GM12878 (cell line): ENCODE measurements at regions of chrX and their contacts with region 1.

Region 1: DNA sequence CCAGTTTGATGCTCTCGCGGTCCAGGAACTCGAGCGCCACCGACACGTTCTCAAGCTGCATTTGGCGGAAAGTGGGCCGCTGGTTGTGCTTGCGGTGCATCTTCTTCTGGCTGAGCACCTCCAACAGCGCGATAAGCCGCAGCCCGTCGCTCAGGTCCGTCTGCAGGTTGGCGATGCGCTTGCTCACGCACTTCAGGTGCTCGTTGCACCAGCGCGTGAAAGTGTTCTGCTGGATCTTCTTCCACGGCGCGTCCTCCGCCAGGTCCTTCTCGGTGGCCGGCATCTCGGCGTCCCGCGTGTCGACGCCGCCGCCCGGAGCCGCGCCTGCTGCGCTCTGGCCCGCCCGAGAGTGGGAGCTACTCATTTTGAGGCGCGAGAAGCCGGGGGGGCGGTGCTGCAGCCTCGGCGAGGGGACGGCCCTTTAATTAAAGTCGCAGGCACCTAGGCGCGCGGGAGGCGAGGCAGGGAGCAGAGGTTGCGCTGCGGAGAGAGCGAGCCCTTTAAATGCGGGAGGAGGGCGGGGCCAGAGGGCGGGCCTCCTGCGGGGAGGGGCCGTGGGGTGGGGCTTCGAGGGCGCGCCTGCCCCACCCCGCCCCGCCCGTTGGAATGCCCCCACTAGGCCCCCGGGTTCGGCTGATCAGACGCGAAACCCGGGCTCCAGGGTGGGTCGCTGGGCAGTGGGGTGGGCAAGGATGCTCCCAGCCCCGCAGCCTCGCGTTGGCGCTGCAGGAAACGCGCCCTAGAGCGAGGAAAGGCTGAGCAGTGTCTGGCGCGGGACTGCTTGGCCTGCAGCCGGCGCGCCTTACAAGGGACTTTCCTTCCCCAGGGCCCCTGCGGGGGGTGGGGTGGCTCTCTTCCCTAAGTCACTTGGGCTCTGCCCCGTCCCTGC is 3.3 kb downstream of the FLNA start:
- DNase-seq: peak; percentile 53
- ATAC-seq: peak; percentile 66
- H3K4me3 ChIP-seq: peak overlapping the region; percentile 88
- H3K27ac ChIP-seq: peak overlapping the region; percentile 58
- H3K4me1 ChIP-seq: peaks cover 11% of the 10 kb centered on the region
- H3K27me3 ChIP-seq: no peaks in the 10 kb centered on the region
- CTCF ChIP-seq: peak in 1 of 3 experiments; percentile 19; a peak in 1 of 6 replicates
- EP300 ChIP-seq: no peak
- POLR2A ChIP-seq: peak; percentile 99
- RAD21 ChIP-seq: no peak

Region 2: GRCh38 chrX:153909024-153909970 is 461.8 kb before region 1 on chrX:
- CTCF ChIA-PET with region 1: no interaction called
- POLR2A ChIA-PET with region 1: no interaction called
- RAD21 ChIA-PET with region 1: no interaction called
- SMC1A ChIA-PET with region 1: no interaction called
- in situ Hi-C with region 1: no loop called
- intact Hi-C with region 1: no loop called
- DNase-seq: no peak
- ATAC-seq: peak; percentile 87
- H3K4me3 ChIP-seq: no peak overlapping the region
- H3K27ac ChIP-seq: no peak overlapping the region
- H3K4me1 ChIP-seq: no peaks in the 10 kb centered on the region
- H3K27me3 ChIP-seq: no peaks in the 10 kb centered on the region
- CTCF ChIP-seq: no peak
- EP300 ChIP-seq: no peak
- POLR2A ChIP-seq: no peak; the same call in 1 of the 2 replicates
- RAD21 ChIP-seq: no peak

Region 3: GRCh38 chrX:153934473-153935325 is 436.4 kb before region 1 on chrX and contains the start of gene NAA10:
- CTCF ChIA-PET with region 1: no interaction called
- POLR2A ChIA-PET with region 1: no interaction called
- RAD21 ChIA-PET with region 1: no interaction called
- SMC1A ChIA-PET with region 1: no interaction called
- in situ Hi-C with region 1: loop called (anchors 5 kb)
- intact Hi-C with region 1: loop called (anchors 5 kb)
- DNase-seq: no peak
- ATAC-seq: peak; percentile 97
- H3K4me3 ChIP-seq: peak within 1 kb of the TSS; percentile 90
- H3K27ac ChIP-seq: 0 out of 2 replicates have a peak within 1 kb of the TSS, but pooled peaks have one; percentile 48
- H3K4me1 ChIP-seq: no peaks in the 10 kb centered on the region
- H3K27me3 ChIP-seq: no peaks in the 10 kb centered on the region
- CTCF ChIP-seq: no peak
- EP300 ChIP-seq: no peak
- POLR2A ChIP-seq: peak; percentile 60; the same call in 1 of the 2 replicates
- RAD21 ChIP-seq: no peak
- polyA plus RNA-seq, gene NAA10: 7.9 to 26.6 TPM

Region 4: GRCh38 chrX:154355776-154356140 is 15.4 kb before region 1 on chrX:
- CTCF ChIA-PET with region 1: no interaction called
- POLR2A ChIA-PET with region 1: no interaction called
- RAD21 ChIA-PET with region 1: no interaction called
- SMC1A ChIA-PET with region 1: no interaction called
- in situ Hi-C with region 1: no loop called
- intact Hi-C with region 1: no loop called
- DNase-seq: no peak
- ATAC-seq: no peak
- H3K4me3 ChIP-seq: no peak overlapping the region
- H3K27ac ChIP-seq: no peak overlapping the region
- H3K4me1 ChIP-seq: no peaks in the 10 kb centered on the region
- H3K27me3 ChIP-seq: no peaks in the 10 kb centered on the region
- CTCF ChIP-seq: no peak
- EP300 ChIP-seq: no peak
- POLR2A ChIP-seq: no peak
- RAD21 ChIP-seq: no peak

Region 5: DNA sequence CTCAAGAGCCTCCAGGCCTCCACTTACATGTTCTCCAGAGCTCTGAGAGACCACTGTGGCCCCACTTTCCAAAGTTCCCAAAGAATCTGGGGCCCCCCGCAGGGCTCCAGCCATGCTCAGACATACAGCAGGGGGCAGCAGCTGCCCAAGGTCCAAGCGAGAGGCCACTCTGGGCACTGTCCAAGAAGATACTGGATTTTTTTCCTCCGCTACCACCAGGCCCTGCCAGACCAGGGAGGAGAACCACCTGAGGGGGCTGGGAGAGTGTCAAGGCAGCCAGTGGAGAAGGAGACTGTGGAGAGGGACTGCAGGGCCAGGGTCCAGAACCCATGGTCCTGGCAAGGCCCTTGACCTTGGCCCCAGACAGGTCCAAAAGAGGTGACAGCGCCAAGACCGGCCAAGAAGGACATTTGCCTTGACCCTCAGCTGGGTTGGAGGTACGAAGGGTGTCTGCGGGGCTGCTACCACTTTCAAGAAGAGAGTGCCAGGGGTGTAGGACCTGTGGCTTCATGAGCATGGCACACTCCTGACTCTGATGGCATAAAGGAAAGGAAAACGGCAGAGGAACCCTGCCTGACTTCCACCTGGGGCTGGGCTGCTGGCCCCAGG is 13.3 kb after region 1 on chrX:
- CTCF ChIA-PET with region 1: interaction called, 17 read pairs
- POLR2A ChIA-PET with region 1: interaction called, 6 read pairs
- RAD21 ChIA-PET with region 1: interaction called, 10 read pairs
- SMC1A ChIA-PET with region 1: interaction called, 10 read pairs
- in situ Hi-C with region 1: no loop called
- intact Hi-C with region 1: loop called (anchors 1 kb)
- DNase-seq: no peak
- ATAC-seq: no peak
- H3K4me3 ChIP-seq: no peak overlapping the region
- H3K27ac ChIP-seq: no peak overlapping the region
- H3K4me1 ChIP-seq: no peaks in the 10 kb centered on the region; the same call in 1 of the 2 replicates
- H3K27me3 ChIP-seq: no peaks in the 10 kb centered on the region
- CTCF ChIP-seq: peak in 1 of 3 experiments; percentile 14; a peak in 1 of 6 replicates
- EP300 ChIP-seq: no peak
- POLR2A ChIP-seq: no peak
- RAD21 ChIP-seq: no peak

Region 6: DNA sequence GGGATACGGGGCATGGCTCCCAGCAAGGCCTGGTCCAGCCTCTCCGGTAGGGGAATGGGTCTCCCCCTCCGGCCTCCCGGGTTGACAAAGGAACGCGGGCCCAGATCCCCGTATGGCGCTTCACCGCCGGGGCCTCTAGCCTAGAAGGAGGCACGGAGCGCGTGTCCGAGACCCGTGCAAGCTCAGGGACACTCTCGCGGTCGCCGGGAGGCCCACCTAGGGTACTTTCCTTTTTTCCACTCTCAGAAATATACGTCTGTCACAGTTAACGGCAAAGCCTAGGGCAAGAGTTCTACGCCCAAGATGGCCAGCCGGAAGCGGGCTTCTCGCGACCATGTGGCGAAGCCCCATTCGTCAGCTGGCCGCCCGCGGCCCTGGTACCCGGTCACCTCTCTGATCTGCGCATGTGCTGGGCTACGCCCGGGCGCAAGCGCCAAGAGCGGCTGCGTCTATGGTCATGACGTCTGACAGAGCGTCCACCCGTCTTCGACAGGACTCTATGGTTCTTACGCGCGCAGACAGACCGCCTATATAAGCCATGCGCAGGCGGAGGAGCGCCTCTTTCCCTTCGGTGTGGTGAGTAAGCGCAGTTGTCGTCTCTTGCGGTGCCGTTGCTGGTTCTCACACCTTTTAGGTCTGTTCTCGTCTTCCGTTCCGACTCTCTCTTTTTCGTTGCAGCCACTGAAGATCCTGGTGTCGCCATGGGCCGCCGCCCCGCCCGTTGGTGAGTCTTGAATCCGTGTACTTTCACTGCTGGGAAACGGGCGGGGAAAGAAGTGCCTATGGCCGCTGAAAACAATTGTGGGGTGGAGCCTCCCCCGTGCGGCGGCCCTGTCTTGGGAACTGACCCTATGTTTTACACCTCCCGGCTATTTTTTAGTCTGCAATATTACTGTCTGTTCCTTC is 26.9 kb after region 1 on chrX and contains the start of gene RPL10:
- CTCF ChIA-PET with region 1: interaction called, 11 read pairs
- POLR2A ChIA-PET with region 1: interaction called, 5 read pairs
- RAD21 ChIA-PET with region 1: interaction called, 4 read pairs
- SMC1A ChIA-PET with region 1: interaction called, 7 read pairs
- in situ Hi-C with region 1: no loop called
- intact Hi-C with region 1: no loop called
- DNase-seq: peak; percentile 90
- ATAC-seq: peak; percentile 78
- H3K4me3 ChIP-seq: peak within 1 kb of the TSS; percentile 73
- H3K27ac ChIP-seq: peak within 1 kb of the TSS; percentile 97
- H3K4me1 ChIP-seq: peaks cover 3% of the 10 kb centered on the region; the same call in 1 of the 2 replicates
- H3K27me3 ChIP-seq: no peaks in the 10 kb centered on the region
- CTCF ChIP-seq: no peak
- EP300 ChIP-seq: no peak
- POLR2A ChIP-seq: peak; percentile 99
- RAD21 ChIP-seq: no peak
- polyA plus RNA-seq, gene RPL10: 5,383 to 7,222 TPM

Region 7: GRCh38 chrX:154428176-154429010 is 57.3 kb after region 1 on chrX and contains the start of gene ATP6AP1:
- CTCF ChIA-PET with region 1: interaction called, 12 read pairs
- POLR2A ChIA-PET with region 1: interaction called, 7 read pairs
- RAD21 ChIA-PET with region 1: interaction called, 3 read pairs
- SMC1A ChIA-PET with region 1: no interaction called
- in situ Hi-C with region 1: no loop called
- intact Hi-C with region 1: loop called (anchors 10 kb)
- DNase-seq: peak; percentile 73
- ATAC-seq: peak; percentile 99
- H3K4me3 ChIP-seq: peak within 1 kb of the TSS; percentile 73
- H3K27ac ChIP-seq: 0 out of 2 replicates have a peak within 1 kb of the TSS, but pooled peaks have one; percentile 4
- H3K4me1 ChIP-seq: no peaks in the 10 kb centered on the region
- H3K27me3 ChIP-seq: no peaks in the 10 kb centered on the region
- CTCF ChIP-seq: no peak
- EP300 ChIP-seq: no peak
- POLR2A ChIP-seq: peak; percentile 87
- RAD21 ChIP-seq: no peak
- polyA plus RNA-seq, gene ATP6AP1: 4.5 to 7.8 TPM

Region 8: DNA sequence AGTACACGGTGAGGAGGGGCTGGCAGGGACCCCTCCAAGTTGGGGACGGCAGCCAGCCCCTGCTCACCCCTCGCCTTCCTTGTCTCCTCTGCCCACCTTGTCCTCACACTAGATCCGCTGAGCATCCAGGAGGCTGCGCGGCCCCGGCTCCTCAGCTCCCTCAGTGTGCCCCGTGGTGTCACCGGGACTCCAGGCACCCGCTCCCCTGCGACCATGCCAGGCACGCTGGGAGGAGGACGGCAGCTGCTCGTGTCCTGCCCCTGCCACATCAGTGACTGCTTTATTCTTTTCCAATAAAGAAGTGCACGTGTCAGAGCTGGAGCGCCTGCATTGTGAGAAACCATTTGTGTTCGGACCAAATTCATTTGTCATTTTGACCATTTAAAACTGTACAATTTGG is 79.2 kb after region 1 on chrX:
- CTCF ChIA-PET with region 1: no interaction called
- POLR2A ChIA-PET with region 1: no interaction called
- RAD21 ChIA-PET with region 1: no interaction called
- SMC1A ChIA-PET with region 1: no interaction called
- in situ Hi-C with region 1: no loop called
- intact Hi-C with region 1: no loop called
- DNase-seq: no peak
- ATAC-seq: no peak
- H3K4me3 ChIP-seq: no peak overlapping the region
- H3K27ac ChIP-seq: no peak overlapping the region
- H3K4me1 ChIP-seq: no peaks in the 10 kb centered on the region
- H3K27me3 ChIP-seq: no peaks in the 10 kb centered on the region
- CTCF ChIP-seq: no peak
- EP300 ChIP-seq: no peak
- POLR2A ChIP-seq: no peak
- RAD21 ChIP-seq: no peak

Region 9: GRCh38 chrX:154526901-154527675 is 156.0 kb after region 1 on chrX:
- CTCF ChIA-PET with region 1: interaction called, 21 read pairs
- POLR2A ChIA-PET with region 1: interaction called, 6 read pairs
- RAD21 ChIA-PET with region 1: interaction called, 12 read pairs
- SMC1A ChIA-PET with region 1: interaction called, 10 read pairs
- in situ Hi-C with region 1: no loop called
- intact Hi-C with region 1: no loop called
- DNase-seq: peak; percentile 36
- ATAC-seq: peak; percentile 95
- H3K4me3 ChIP-seq: no peak overlapping the region
- H3K27ac ChIP-seq: peak overlapping the region; percentile 83
- H3K4me1 ChIP-seq: peaks cover 10% of the 10 kb centered on the region
- H3K27me3 ChIP-seq: no peaks in the 10 kb centered on the region
- CTCF ChIP-seq: peak; percentile 52 to 57 (median 55)
- EP300 ChIP-seq: no peak
- POLR2A ChIP-seq: peak; percentile 68
- RAD21 ChIP-seq: peak; percentile 27; the same call in 1 of the 2 replicates

Region 10: DNA sequence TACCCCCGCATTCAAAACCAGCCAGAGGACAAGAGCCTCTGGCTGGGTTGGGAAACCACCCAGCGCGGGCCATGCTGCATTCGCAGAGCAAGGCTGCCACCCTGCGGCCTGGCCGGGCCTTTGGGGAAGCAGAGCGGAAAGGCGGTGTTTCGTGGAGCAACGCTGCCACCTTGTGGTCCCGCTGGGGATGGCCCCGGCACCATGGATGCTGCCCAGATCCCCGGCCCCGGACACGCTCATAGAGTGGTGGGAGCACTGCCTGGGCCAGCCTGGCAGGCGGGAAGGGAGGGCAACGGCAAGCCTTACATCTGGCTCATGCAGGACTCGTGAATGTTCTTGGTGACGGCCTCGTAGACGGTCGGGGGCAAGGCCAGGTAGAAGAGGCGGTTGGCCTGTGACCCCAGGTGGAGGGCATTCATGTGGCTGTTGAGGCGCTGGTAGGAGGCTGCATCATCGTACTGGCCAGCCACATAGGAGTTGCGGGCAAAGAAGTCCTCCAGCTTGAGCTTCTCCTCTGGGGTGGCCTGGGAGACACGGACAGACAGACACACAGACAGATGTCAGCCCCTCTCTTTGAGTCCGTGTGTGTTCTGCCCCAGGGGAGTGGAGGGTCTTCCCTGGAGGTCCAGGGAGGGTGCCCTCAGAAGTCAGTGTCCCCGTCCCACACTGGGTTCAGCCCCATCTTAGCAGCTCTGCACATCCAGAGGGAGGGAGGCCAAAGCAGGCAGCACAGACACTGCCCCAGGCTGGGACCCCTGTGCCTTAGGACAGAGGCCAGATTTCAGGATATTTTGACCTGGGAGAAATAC is 163.9 kb after region 1 on chrX:
- CTCF ChIA-PET with region 1: interaction called, 18 read pairs
- POLR2A ChIA-PET with region 1: interaction called, 5 read pairs
- RAD21 ChIA-PET with region 1: interaction called, 11 read pairs
- SMC1A ChIA-PET with region 1: interaction called, 4 read pairs
- in situ Hi-C with region 1: loop called (anchors 5 kb)
- intact Hi-C with region 1: loop called (anchors 2 kb)
- DNase-seq: peak; percentile 38
- ATAC-seq: peak; percentile 99
- H3K4me3 ChIP-seq: no peak overlapping the region
- H3K27ac ChIP-seq: peak overlapping the region; percentile 62
- H3K4me1 ChIP-seq: peaks cover 5% of the 10 kb centered on the region
- H3K27me3 ChIP-seq: no peaks in the 10 kb centered on the region
- CTCF ChIP-seq: peak; percentile 98 to 100 (median 100); a peak in 5 of 6 replicates
- EP300 ChIP-seq: no peak
- POLR2A ChIP-seq: no peak
- RAD21 ChIP-seq: peak; percentile 100